ENCODE measurements at regions of chr19 and their contacts with region 1.

Region 1: GRCh38 chr19:55258828-55259539 is at the start of gene PPP6R1:
- DNase-seq: peak; percentile 99
- H3K4me3 Mint-ChIP-seq: peak within 1 kb of the TSS; percentile 96
- H3K27ac Mint-ChIP-seq: peak within 1 kb of the TSS; percentile 92
- H3K4me1 Mint-ChIP-seq: peaks cover 32% of the 10 kb centered on the region
- H3K27me3 Mint-ChIP-seq: no peaks in the 10 kb centered on the region
- CTCF ChIP-seq: no peak
- total RNA-seq, gene PPP6R1: 126 and 132 TPM in 2 replicates

Region 2: DNA sequence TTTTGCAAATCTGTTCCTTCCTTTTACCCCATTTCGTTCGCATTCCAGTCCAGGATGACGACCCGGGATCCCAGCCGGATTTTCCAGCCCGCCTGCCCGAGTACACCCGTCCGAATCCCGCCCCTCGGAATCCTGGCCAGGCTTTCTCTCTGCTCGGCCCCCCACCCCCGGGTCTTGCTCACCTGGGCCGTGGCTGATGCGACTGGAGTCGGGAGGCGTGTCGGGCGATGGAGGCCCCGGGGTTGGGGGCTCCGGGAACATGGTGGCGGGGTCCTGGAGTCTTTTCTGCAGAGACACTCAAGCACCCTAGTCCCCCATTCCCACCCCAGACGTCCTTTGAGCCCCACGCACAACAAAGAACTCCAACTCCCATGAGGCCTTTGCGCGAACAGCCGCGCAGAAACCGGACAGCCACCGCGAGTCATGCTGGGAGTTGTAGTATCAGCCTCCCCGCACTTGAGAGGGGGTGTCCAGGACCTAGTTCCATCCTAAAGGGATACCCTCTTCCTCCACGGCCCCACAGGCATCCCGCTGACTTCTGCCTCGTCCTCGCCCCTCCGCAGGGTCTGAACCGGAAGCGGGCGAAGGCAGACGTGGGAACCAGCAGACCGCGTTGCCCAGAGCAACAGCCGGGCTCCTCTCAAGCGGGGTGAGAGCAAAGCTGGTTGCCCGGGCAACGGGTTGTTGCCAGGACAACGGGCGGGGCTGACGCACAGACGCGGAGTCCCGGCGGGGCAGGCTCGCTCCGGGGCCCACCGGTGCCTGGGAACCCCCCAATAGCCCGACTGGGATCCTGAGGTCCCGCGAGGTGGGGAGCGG is 80.0 kb before region 1 on chr19:
- CTCF ChIA-PET with region 1: no interaction called
- intact Hi-C with region 1: loop called (anchors 10 kb)
- DNase-seq: peak; percentile 90
- H3K4me3 Mint-ChIP-seq: peak overlapping the region; percentile 65
- H3K27ac Mint-ChIP-seq: peak overlapping the region; percentile 92
- H3K4me1 Mint-ChIP-seq: peaks cover 22% of the 10 kb centered on the region
- H3K27me3 Mint-ChIP-seq: peaks cover 56% of the 10 kb centered on the region
- CTCF ChIP-seq: no peak

Region 3: GRCh38 chr19:55209693-55210472 is 49.1 kb before region 1 on chr19:
- CTCF ChIA-PET with region 1: interaction called, 3 read pairs
- intact Hi-C with region 1: loop called (anchors 1 kb)
- DNase-seq: peak; percentile 75
- H3K4me3 Mint-ChIP-seq: peak overlapping the region; percentile 53
- H3K27ac Mint-ChIP-seq: peak overlapping the region; percentile 88
- H3K4me1 Mint-ChIP-seq: peaks cover 33% of the 10 kb centered on the region
- H3K27me3 Mint-ChIP-seq: no peaks in the 10 kb centered on the region
- CTCF ChIP-seq: no peak

Region 4: DNA sequence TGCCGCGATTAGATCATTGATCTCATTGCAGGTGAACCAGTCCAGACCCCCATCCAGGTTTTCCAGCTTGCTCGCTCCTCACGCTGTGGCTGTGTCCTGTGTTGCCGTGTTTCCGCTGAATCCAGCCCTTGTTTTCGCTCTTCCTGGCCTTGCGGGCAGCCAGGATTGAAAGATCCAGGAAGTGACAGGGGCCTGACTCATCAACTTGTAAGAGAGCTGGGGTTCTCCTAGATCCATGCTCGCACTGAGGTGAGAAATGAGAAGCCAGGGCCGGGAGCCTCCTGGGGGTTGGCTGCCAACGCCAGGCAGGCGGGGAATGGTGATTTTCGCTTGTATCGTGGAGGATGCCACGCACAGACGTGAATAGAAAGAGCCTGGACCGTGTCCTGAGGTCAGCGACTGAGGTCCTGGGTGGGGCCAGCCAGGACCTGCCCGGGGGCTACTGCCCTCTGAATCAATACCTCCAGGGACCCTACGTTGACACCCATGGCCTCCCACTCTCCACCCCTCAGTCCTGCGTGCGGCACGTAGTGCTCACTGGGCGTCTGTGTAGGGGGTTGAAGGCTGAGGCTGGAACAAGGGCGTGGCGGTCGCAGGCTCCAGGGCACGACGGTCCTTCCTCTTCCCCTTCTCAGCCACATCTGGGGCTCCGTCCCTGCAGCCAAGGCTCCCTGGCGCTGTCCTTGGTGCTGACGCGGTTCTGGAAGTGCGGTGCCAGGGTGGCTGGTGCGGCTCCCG is 42.4 kb before region 1 on chr19:
- CTCF ChIA-PET with region 1: interaction called, 6 read pairs
- intact Hi-C with region 1: loop called (anchors 1 kb)
- DNase-seq: peak; percentile 96
- H3K4me3 Mint-ChIP-seq: peak overlapping the region; percentile 76
- H3K27ac Mint-ChIP-seq: peak overlapping the region; percentile 95
- H3K4me1 Mint-ChIP-seq: peaks cover 26% of the 10 kb centered on the region
- H3K27me3 Mint-ChIP-seq: no peaks in the 10 kb centered on the region
- CTCF ChIP-seq: no peak

Measured in Calu3 (cell line).